Right ventricle myocardium superior (tissue), 1 donor: ENCODE measurements at regions of chr20 and their contacts with region 1.

Region 1: GRCh38 chr20:31851240-31851955 is 6.0 kb upstream of the FOXS1 start:
- DNase-seq: no peak
- ATAC-seq: no peak

Region 2: DNA sequence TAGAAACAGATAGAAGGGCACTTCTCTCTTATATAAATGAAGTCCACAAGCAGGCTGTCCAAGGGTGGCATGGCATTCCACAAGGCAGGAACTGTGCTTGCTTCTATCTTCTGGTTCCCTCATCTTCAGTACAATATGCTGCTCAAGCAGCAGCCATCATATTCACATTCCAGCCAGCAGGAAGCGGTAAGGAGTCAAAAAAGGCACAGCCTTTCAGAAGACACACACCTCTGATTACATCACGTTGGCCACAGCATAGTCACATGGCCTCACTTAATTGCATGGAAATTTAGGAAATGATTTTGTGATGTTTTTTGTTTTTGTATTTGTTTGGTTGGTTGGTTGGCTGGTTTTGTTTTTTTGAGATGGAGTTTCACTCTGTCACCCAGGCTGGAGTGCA is 357.3 kb before region 1 on chr20:
- intact Hi-C with region 1: no loop called
- DNase-seq: no peak
- ATAC-seq: no peak

Region 3: DNA sequence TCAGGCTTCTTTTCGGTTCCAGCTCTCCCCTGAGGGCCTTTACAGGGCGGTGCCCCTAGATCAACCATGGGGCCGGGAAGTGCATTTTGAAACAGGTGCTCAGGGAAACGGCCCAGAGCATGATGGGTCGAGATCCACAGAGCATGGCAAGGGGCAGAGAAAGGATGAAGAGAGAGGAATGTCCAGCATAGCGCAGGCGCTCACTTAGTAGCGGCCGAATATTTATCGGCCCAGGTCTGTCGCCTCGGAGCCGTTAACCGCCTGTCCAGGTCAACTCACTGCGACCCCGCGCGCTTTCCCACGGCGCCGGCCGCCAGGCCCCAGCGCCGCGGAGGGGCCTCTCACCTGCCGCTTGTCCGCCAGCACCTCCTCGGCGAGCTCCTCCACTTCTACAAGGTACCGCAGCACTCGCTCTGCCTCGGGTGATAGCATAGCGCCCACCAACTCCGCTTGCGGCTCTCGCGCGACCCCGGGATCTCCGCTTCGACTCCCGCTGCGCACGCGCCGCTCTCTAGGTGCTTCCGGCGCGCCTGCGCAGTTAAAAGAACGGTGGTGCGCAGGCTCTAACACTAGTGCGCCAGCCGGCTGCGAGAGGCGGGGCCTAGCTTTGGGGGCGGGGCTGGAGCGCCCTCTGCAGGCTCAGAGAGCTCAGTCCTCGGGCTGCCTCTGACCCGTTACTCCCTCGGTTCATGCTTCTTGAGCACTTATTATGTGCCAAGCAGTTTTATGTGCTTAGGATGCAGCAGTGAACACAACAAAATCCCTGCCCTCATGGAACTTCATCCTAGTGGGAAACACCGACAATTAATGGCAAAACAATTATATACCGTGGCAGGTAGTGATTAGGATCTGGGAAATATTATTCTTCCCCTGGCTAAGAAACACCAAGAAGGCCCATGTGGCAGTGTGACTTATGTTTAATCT is 100.4 kb after region 1 on chr20 and contains the start of gene PDRG1:
- intact Hi-C with region 1: loop called (anchors 5 kb)
- DNase-seq: peak; percentile 98
- ATAC-seq: peak; percentile 99
- total RNA-seq, gene PDRG1: 11.1 TPM

Region 4: GRCh38 chr20:31968291-31969126 is 117.1 kb after region 1 on chr20:
- intact Hi-C with region 1: no loop called
- DNase-seq: peak; percentile 84
- ATAC-seq: peak; percentile 96